ENCODE measurements at regions of chr15 and their contacts with region 1.

Region 1: GRCh38 chr15:67101911-67102598 is 36.7 kb downstream of the SMAD3 start:
- DNase-seq: peak; percentile 74
- ATAC-seq: peak; percentile 68
- H3K4me3 Mint-ChIP-seq: no peak overlapping the region
- H3K27ac Mint-ChIP-seq: no peak overlapping the region
- H3K4me1 Mint-ChIP-seq: peaks cover 30% of the 10 kb centered on the region
- H3K27me3 Mint-ChIP-seq: no peaks in the 10 kb centered on the region

Region 2: GRCh38 chr15:66751541-66751952 is 350.5 kb before region 1 on chr15:
- CTCF ChIA-PET with region 1: no interaction called
- DNase-seq: no peak
- ATAC-seq: peak; percentile 16
- H3K4me3 Mint-ChIP-seq: no peak overlapping the region
- H3K27ac Mint-ChIP-seq: no peak overlapping the region
- H3K4me1 Mint-ChIP-seq: no peaks in the 10 kb centered on the region
- H3K27me3 Mint-ChIP-seq: peaks cover 6% of the 10 kb centered on the region

Region 3: GRCh38 chr15:66841953-66842681 is 259.9 kb before region 1 on chr15:
- CTCF ChIA-PET with region 1: no interaction called
- DNase-seq: no peak
- ATAC-seq: peak; percentile 61
- H3K4me3 Mint-ChIP-seq: no peak overlapping the region
- H3K27ac Mint-ChIP-seq: no peak overlapping the region
- H3K4me1 Mint-ChIP-seq: no peaks in the 10 kb centered on the region
- H3K27me3 Mint-ChIP-seq: peaks cover 41% of the 10 kb centered on the region

Region 4: DNA sequence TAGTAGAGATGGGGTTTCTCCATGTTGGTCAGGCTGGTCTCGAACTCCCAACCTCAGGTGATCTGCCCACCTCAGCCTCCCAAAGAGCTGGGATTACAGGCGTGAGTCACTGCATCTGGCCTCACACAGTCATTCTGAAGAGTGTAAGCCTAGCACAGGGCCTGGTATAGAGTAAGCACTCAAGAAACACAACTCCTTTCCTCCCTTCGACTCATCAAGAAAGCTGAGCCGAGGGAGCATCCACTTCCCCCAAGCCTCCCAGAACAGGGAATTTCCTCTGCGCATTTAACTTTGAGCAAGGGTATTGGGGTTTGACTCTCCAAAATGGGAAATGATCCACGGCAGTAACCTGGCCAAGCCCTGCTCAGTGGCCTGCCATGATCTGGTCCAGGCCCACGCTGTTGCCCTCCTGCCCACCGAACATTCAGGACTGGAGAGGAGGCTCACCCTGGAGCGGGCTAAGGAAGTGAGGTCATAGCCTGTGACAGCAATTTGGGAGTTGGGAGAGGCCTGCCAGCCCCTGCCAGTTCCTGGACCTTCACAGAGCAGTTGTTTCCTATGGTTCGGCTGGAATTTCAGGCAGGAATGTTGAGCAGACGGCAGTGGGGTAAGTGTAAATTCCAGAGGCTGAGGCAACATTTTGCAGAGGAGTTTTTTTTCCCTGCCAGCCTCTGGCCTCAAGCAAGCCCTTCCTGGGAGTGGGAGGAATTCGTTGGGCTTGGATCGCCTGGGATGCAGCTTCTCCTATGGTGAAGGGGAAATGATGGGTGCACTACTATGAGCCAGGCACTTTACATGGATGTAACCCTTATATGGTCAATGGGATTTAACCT is 57.9 kb before region 1 on chr15:
- CTCF ChIA-PET with region 1: no interaction called
- DNase-seq: no peak
- ATAC-seq: no peak
- H3K4me3 Mint-ChIP-seq: no peak overlapping the region
- H3K27ac Mint-ChIP-seq: no peak overlapping the region
- H3K4me1 Mint-ChIP-seq: peaks cover 25% of the 10 kb centered on the region
- H3K27me3 Mint-ChIP-seq: peaks cover 15% of the 10 kb centered on the region

Region 5: DNA sequence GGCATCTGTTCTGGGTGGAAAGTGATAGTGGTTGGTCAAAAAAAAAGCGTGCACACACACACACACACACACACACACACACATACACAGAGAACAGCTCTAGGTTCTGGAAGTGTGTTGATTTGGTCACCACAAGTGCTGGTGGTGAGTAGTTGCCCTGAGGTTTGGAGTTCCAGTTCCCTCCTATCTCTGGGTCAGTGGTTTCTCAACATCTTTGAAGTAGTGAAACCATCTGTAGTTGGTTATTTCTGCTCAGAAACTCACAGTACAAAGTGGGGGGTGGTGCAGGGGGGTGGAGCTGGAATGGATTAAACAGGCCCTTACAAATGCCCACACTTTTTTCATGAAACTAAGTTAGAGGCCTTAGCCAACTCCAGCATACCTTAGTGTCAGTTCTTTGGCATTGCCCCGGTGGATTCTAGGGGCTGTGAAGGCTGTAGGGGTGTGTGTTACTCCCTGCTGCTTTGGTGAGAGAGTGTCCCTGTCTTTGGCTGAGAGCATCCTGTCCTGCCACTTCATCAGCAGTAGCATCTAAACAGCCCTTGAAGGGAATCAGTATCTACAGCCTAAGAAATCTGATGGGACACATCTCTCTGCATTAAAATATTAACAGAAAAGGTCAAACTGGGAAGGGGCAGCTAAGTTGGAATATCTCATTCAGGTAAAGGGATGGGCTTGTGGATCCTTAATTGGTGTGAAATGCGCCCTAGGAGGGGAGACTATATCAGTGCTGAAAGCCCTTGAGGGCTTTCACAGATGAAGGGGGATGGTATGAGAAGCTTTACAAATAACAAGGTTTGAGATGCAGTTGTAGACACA is 16.0 kb before region 1 on chr15:
- CTCF ChIA-PET with region 1: interaction called, 20 read pairs
- DNase-seq: peak; percentile 82
- ATAC-seq: peak; percentile 41
- H3K4me3 Mint-ChIP-seq: peak overlapping the region; percentile 48
- H3K27ac Mint-ChIP-seq: peak overlapping the region; percentile 90
- H3K4me1 Mint-ChIP-seq: peaks cover 98% of the 10 kb centered on the region
- H3K27me3 Mint-ChIP-seq: no peaks in the 10 kb centered on the region

Region 6: GRCh38 chr15:67091071-67091979 is 10.7 kb before region 1 on chr15:
- CTCF ChIA-PET with region 1: interaction called, 20 read pairs
- DNase-seq: peak; percentile 94
- ATAC-seq: peak; percentile 79
- H3K4me3 Mint-ChIP-seq: peak overlapping the region; percentile 58
- H3K27ac Mint-ChIP-seq: peak overlapping the region; percentile 86
- H3K4me1 Mint-ChIP-seq: peaks cover 100% of the 10 kb centered on the region
- H3K27me3 Mint-ChIP-seq: no peaks in the 10 kb centered on the region

Region 7: GRCh38 chr15:67120839-67121643 is 19.0 kb after region 1 on chr15:
- CTCF ChIA-PET with region 1: interaction called, 18 read pairs
- DNase-seq: peak; percentile 90
- ATAC-seq: peak; percentile 95
- H3K4me3 Mint-ChIP-seq: peak overlapping the region; percentile 38
- H3K27ac Mint-ChIP-seq: peak overlapping the region; percentile 92
- H3K4me1 Mint-ChIP-seq: peaks cover 84% of the 10 kb centered on the region
- H3K27me3 Mint-ChIP-seq: no peaks in the 10 kb centered on the region